ENCODE measurements at regions of chr2 and their contacts with region 1.

Region 1: GRCh38 chr2:98479959-98480524 is 35.4 kb downstream of the INPP4A start:
- DNase-seq: peak; percentile 74
- H3K4me3 Mint-ChIP-seq: peak overlapping the region; percentile 21
- H3K27ac Mint-ChIP-seq: peak overlapping the region; percentile 81
- H3K4me1 Mint-ChIP-seq: peaks cover 96% of the 10 kb centered on the region
- H3K27me3 Mint-ChIP-seq: no peaks in the 10 kb centered on the region

Region 2: GRCh38 chr2:98149333-98149697 is 330.7 kb before region 1 on chr2:
- CTCF ChIA-PET with region 1: no interaction called
- POLR2A ChIA-PET with region 1: no interaction called
- intact Hi-C with region 1: no loop called
- DNase-seq: peak; percentile 30
- H3K4me3 Mint-ChIP-seq: no peak overlapping the region
- H3K27ac Mint-ChIP-seq: no peak overlapping the region
- H3K4me1 Mint-ChIP-seq: peaks cover 4% of the 10 kb centered on the region
- H3K27me3 Mint-ChIP-seq: peaks cover 6% of the 10 kb centered on the region

Region 3: DNA sequence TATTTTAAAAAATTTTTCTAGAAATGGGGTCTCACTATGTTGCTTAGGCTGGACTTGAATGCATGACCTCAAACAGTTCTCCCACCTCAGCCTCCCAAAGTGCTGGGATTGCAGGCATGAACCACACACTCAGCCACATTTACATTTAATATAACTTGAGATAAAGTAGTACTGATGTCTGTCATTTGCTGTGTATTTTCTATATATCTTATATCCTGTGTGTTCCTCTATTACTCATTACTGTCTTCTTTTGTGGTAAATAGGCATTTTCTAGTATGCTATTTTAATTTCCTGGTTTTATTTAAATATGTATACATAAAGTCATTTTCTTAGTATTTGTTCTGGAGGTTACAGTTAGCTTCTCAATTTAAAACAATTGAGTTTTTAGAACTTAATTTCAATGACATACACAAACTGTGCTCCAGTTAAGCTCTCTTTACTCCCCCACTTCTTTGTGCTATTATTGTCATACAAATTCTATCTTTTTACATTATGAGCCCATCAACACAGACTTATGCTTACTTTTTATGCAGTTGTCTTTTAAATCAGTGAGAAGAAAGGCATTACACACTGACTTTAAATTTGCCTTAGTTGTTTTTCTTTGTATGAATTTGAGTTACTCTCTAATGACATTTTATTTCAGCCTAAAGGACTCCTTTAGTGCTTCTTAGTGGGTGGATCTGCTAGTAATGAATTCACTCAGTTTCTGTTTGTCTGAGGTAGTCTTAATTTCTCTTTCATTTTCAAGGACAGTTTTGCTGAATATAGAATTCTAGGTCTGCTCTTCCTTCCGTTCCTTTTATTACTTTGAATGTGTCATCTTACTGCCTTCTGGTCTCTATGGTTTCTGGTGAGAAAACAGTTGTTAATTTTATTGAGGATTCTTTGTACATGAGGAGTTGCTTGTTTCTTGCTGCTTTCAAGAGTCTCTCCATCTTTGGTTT is 41.6 kb before region 1 on chr2:
- CTCF ChIA-PET with region 1: interaction called, 5 read pairs
- POLR2A ChIA-PET with region 1: no interaction called
- intact Hi-C with region 1: loop called (anchors 2 kb)
- DNase-seq: no peak
- H3K4me3 Mint-ChIP-seq: peak overlapping the region; percentile 8
- H3K27ac Mint-ChIP-seq: peak overlapping the region; percentile 73
- H3K4me1 Mint-ChIP-seq: peaks cover 27% of the 10 kb centered on the region
- H3K27me3 Mint-ChIP-seq: no peaks in the 10 kb centered on the region

Region 4: GRCh38 chr2:98444436-98445176 is 35.4 kb before region 1 on chr2 and contains the start of gene INPP4A:
- CTCF ChIA-PET with region 1: interaction called, 5 read pairs
- POLR2A ChIA-PET with region 1: interaction called, 16 read pairs
- intact Hi-C with region 1: loop called (anchors 2 kb)
- DNase-seq: peak; percentile 84
- H3K4me3 Mint-ChIP-seq: peak within 1 kb of the TSS; percentile 89
- H3K27ac Mint-ChIP-seq: peak within 1 kb of the TSS; percentile 86
- H3K4me1 Mint-ChIP-seq: peaks cover 43% of the 10 kb centered on the region
- H3K27me3 Mint-ChIP-seq: no peaks in the 10 kb centered on the region
- total RNA-seq, gene INPP4A: 40.7 to 42.0 TPM

Region 5: DNA sequence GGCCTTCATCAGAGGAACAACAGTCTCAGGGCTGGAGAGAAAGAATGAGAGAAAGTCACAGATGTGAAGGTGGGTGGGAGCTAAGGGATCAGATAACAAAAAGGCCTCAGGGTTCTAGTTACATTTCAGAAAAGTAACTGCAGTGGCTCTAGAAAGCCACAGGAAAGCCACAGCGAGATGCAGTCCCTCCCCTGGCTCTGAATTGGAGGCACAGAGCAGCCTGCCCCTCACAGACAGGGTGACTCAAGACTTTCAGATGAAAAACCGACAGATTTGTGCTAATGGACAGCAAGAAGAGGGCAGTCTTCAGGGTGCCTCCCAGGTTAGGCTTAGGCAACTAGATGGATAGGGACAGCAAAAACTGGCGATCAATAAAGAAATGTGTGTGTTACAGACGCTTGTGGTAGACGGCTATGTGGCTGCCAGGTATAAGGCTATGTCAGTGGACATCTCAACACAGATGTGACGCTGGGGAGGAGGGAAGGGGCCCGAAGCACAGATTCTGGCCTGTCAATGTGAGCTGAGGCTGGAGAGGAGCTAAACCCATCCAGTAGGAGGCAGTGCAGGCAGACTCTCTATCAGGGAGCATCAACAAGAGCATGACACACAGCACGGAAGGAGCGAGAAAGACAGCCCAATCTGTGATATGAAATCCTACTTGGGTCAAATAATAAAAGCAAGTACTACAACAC is 154.5 kb after region 1 on chr2:
- CTCF ChIA-PET with region 1: no interaction called
- POLR2A ChIA-PET with region 1: no interaction called
- intact Hi-C with region 1: no loop called
- DNase-seq: peak; percentile 70
- H3K4me3 Mint-ChIP-seq: no peak overlapping the region
- H3K27ac Mint-ChIP-seq: peak overlapping the region; percentile 72
- H3K4me1 Mint-ChIP-seq: peaks cover 35% of the 10 kb centered on the region
- H3K27me3 Mint-ChIP-seq: no peaks in the 10 kb centered on the region

Region 6: DNA sequence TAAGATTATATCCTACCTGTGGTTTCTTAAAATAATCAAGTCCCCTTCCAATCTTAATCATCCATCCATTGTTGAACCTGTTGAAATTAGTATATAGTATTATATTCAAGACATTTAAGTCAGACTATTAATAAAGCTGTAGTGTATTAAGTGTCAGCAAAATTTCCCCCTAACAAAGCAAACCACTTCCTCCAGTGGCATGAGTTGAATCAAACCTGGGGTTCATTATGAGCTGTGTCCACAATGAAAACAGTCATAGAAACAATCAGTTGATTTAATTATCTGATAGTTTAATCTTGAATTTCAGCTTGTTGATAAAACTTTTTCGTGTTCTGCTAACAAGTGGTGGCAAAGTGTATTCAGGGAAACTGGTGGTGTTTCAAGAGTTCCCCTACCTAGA is 689.5 kb after region 1 on chr2:
- CTCF ChIA-PET with region 1: no interaction called
- POLR2A ChIA-PET with region 1: no interaction called
- intact Hi-C with region 1: no loop called
- DNase-seq: no peak
- H3K4me3 Mint-ChIP-seq: no peak overlapping the region
- H3K27ac Mint-ChIP-seq: peak overlapping the region; percentile 26
- H3K4me1 Mint-ChIP-seq: peaks cover 28% of the 10 kb centered on the region
- H3K27me3 Mint-ChIP-seq: no peaks in the 10 kb centered on the region

Measured in activated CD4-positive, alpha-beta memory T cell treated with anti-CD3 and anti-CD28 coated beads for 36 hours (primary cell).